Right cardiac atrium (tissue), 5 donors: ENCODE measurements at regions of chr12 and their contacts with region 1.

Region 1: GRCh38 chr12:22624870-22625761 is at the start of gene ETNK1:
- DNase-seq: peak; percentile 96 to 98 (median 98)
- ATAC-seq: peak; percentile 100
- H3K4me3 ChIP-seq: peak within 1 kb of the TSS; percentile 89
- H3K27ac ChIP-seq: peak within 1 kb of the TSS; percentile 98
- H3K4me1 ChIP-seq: no peaks in the 10 kb centered on the region
- H3K27me3 ChIP-seq: no peaks in the 10 kb centered on the region
- total RNA-seq, gene ETNK1: 21.0 to 36.2 (median 29.7) TPM

Region 2: DNA sequence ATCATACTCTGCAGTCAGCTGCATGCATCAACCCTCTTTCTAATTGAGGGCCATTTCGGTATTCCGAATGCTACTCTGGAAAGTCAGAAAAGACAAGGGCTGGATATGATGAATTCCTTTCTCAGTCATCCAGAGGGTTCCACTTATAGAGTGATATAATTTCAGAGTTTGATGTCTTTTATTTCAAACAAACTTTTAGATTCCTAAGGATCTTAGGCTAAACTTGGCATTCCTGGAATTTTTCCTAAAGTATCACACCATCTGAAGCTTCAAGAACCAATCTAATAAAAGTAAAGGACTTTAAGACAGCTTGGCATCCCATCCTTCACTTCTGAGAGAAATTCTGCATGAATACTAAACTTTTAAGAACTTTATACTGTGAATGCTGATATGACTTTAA is 781.3 kb before region 1 on chr12:
- intact Hi-C with region 1: no loop called
- DNase-seq: no peak
- ATAC-seq: no peak
- H3K4me3 ChIP-seq: no peak overlapping the region
- H3K27ac ChIP-seq: no peak overlapping the region
- H3K4me1 ChIP-seq: no peaks in the 10 kb centered on the region
- H3K27me3 ChIP-seq: no peaks in the 10 kb centered on the region

Region 3: DNA sequence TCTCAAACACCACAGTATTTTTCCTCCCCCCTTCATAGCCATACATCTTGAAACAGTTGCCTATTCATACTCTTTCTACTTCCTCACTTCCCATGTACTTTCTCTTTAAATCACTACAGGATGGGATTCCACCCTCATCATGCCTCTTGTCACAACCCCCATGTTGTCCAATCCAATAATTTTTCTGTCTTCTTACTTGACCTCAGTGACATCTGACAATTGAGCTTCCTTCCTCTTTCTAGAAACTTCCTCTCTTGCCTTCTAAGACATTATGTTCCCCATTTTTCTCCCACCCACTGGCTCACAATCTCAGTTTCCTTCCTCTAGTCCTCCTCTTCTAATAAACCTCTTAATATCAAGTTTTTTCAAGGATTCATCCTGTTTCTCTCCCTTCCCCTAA is 86.1 kb before region 1 on chr12:
- intact Hi-C with region 1: loop called in 3 of 4 experiments (anchors 2 to 10 kb)
- DNase-seq: no peak
- ATAC-seq: peak; percentile 6 to 64
- H3K4me3 ChIP-seq: no peak overlapping the region
- H3K27ac ChIP-seq: no peak overlapping the region
- H3K4me1 ChIP-seq: no peaks in the 10 kb centered on the region
- H3K27me3 ChIP-seq: no peaks in the 10 kb centered on the region

Region 4: DNA sequence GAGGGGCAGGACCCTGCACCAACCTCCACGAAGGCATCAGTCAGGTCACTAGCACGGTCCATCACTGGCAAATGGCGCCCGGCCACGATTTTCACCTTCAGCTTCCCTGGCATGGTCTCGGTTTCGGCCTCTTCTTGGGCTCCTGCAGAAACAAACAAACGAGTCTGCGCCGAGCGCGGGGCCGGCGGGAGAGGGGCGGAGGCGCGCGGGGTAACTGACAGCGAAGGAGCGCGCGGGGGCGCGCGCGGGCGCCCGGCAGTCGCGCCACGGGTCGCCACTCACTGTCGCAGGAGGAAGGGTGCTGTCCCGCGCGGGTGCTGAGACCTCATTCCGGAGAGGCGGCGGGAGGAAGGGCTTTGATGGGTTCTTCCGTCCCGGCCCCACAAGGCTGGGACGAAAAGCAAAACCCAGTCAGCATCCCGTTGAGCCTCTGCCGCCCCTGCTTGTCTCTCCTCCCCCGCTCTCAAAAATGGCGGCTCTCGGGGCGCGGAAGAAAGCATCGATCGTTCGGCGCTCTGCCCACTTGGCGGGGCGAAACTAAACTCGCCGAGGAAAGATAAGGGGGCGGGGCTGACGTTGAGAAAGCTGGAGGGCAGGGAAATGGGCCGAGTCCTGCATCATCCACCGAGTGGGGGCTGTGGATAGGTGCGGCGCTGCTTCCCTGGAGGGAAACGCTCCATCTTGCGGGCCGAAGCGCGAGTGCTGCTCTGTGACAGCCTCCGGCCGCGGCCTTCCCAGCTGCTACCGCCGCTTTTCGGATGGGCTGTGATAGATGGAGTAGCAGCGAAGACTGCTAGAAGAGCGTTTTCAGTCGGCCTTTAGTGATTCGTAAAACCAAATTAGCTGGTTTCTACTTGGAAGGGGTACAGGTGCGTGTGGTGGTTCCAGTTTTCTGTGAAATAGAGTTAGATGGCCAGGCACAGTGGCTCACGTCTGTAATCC is 80.8 kb before region 1 on chr12 and contains the start of gene C2CD5:
- intact Hi-C with region 1: loop called (anchors 2 to 10 kb)
- DNase-seq: peak; percentile 98 to 99 (median 98)
- ATAC-seq: peak; percentile 97 to 99
- H3K4me3 ChIP-seq: peak within 1 kb of the TSS; percentile 89
- H3K27ac ChIP-seq: peak within 1 kb of the TSS; percentile 97
- H3K4me1 ChIP-seq: no peaks in the 10 kb centered on the region
- H3K27me3 ChIP-seq: no peaks in the 10 kb centered on the region
- total RNA-seq, gene C2CD5: 17.7 to 28.1 (median 23.5) TPM

Region 5: GRCh38 chr12:22919883-22920282 is 294.8 kb after region 1 on chr12:
- intact Hi-C with region 1: no loop called
- DNase-seq: no peak
- ATAC-seq: no peak
- H3K4me3 ChIP-seq: no peak overlapping the region
- H3K27ac ChIP-seq: no peak overlapping the region
- H3K4me1 ChIP-seq: peaks cover 3% of the 10 kb centered on the region
- H3K27me3 ChIP-seq: no peaks in the 10 kb centered on the region

Region 6: GRCh38 chr12:23339783-23340182 is 714.7 kb after region 1 on chr12:
- intact Hi-C with region 1: no loop called
- DNase-seq: no peak
- ATAC-seq: no peak
- H3K4me3 ChIP-seq: no peak overlapping the region
- H3K27ac ChIP-seq: no peak overlapping the region
- H3K4me1 ChIP-seq: no peaks in the 10 kb centered on the region
- H3K27me3 ChIP-seq: no peaks in the 10 kb centered on the region